ENCODE measurements at regions of chr13 and their contacts with region 1.

Region 1: DNA sequence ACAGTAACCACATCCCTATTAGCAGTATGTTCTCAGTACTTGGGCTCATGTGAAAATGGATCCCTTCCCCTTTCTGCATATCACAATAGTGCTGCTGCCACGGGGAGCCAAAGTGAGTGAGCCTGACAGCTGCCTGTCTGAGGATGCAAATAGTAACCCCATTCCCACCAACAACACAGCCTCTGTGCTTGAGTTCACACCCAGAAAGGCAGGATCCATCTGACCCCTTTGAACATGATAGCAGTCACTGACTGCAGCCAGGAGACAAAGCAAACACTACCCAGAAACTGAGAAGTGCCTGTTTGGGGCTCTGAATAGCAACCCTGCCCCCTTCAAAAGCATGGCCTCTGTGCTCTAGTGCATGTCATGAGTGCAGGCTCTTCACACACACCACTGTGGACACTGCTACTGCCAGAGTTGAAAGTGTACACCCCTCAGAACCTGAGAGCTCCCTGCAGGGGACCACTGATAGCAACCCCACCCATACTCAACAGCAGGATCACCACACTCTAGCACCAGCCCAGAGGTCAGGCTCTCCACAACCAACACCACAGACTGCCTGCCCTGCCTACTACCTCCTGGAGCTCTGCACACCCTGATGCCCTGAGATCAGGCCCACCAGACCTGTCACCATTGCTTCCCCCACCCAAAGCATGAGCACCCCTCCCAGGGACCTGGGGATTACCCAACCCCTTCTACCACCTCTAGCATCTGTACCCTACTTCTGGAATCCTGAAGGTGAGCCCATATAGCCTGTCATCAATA is 1563.5 kb upstream of the PRR20A start:
- DNase-seq: no peak
- H3K4me3 ChIP-seq: peak overlapping the region; percentile 48 to 67 (median 53)
- H3K27ac ChIP-seq: peak overlapping the region; percentile 51; the same call in 1 of the 2 replicates
- H3K4me1 ChIP-seq: peaks cover 0 to 18% (median 8%) of the 10 kb centered on the region in 4 experiments; a peak in 3 of 7 replicates
- H3K27me3 ChIP-seq: no peaks in the 10 kb centered on the region
- CTCF ChIP-seq: no peak
- EP300 ChIP-seq: no peak
- POLR2A ChIP-seq: peak; percentile 65 to 78
- RAD21 ChIP-seq: no peak

Region 2: GRCh38 chr13:55566334-55566733 is 10.9 kb before region 1 on chr13:
- CTCF ChIA-PET with region 1: interaction called, 7 read pairs
- POLR2A ChIA-PET with region 1: interaction called, 23 read pairs
- DNase-seq: no peak
- H3K4me3 ChIP-seq: no peak overlapping the region
- H3K27ac ChIP-seq: no peak overlapping the region
- H3K4me1 ChIP-seq: peaks cover 0 to 4% (median 3%) of the 10 kb centered on the region in 4 experiments; a peak in 3 of 7 replicates
- H3K27me3 ChIP-seq: no peaks in the 10 kb centered on the region
- CTCF ChIP-seq: no peak
- EP300 ChIP-seq: no peak
- POLR2A ChIP-seq: no peak
- RAD21 ChIP-seq: no peak

Region 3: GRCh38 chr13:55653497-55653896 is 76.2 kb after region 1 on chr13:
- CTCF ChIA-PET with region 1: no interaction called
- POLR2A ChIA-PET with region 1: interaction called, 22 read pairs
- DNase-seq: no peak
- H3K4me3 ChIP-seq: peak overlapping the region in 1 of 4 experiments; percentile 44; a peak in 1 of 8 replicates
- H3K27ac ChIP-seq: no peak overlapping the region
- H3K4me1 ChIP-seq: peaks cover 0 to 17% (median 3%) of the 10 kb centered on the region in 4 experiments; a peak in 3 of 7 replicates
- H3K27me3 ChIP-seq: no peaks in the 10 kb centered on the region
- CTCF ChIP-seq: no peak
- EP300 ChIP-seq: no peak
- POLR2A ChIP-seq: peak in 1 of 2 experiments; percentile 2; a peak in 1 of 3 replicates
- RAD21 ChIP-seq: no peak

Region 4: GRCh38 chr13:55660851-55661250 is 83.6 kb after region 1 on chr13:
- CTCF ChIA-PET with region 1: no interaction called
- POLR2A ChIA-PET with region 1: interaction called, 11 read pairs
- DNase-seq: no peak
- H3K4me3 ChIP-seq: peak overlapping the region in 2 of 4 experiments; percentile 18 to 19; a peak in 2 of 8 replicates
- H3K27ac ChIP-seq: peak overlapping the region; percentile 28; the same call in 1 of the 2 replicates
- H3K4me1 ChIP-seq: peaks cover 0 to 14% (median 6%) of the 10 kb centered on the region in 4 experiments; a peak in 4 of 7 replicates
- H3K27me3 ChIP-seq: no peaks in the 10 kb centered on the region
- CTCF ChIP-seq: no peak
- EP300 ChIP-seq: no peak
- POLR2A ChIP-seq: no peak
- RAD21 ChIP-seq: no peak

Region 5: GRCh38 chr13:55705971-55706370 is 128.7 kb after region 1 on chr13:
- CTCF ChIA-PET with region 1: no interaction called
- POLR2A ChIA-PET with region 1: no interaction called
- DNase-seq: no peak
- H3K4me3 ChIP-seq: no peak overlapping the region
- H3K27ac ChIP-seq: no peak overlapping the region
- H3K4me1 ChIP-seq: peaks cover 0 to 6% (median 2%) of the 10 kb centered on the region in 4 experiments; a peak in 2 of 7 replicates
- H3K27me3 ChIP-seq: no peaks in the 10 kb centered on the region
- CTCF ChIP-seq: no peak
- EP300 ChIP-seq: no peak
- POLR2A ChIP-seq: no peak
- RAD21 ChIP-seq: no peak

Measured in H1 (cell line).